ENCODE measurements at regions of chr10 and their contacts with region 1.

Region 1: GRCh38 chr10:99845837-99846382 is 63.5 kb downstream of the ABCC2 start:
- DNase-seq: peak; percentile 79
- ATAC-seq: peak; percentile 95 to 98

Region 2: GRCh38 chr10:98748298-98748697 is 1097.6 kb before region 1 on chr10:
- intact Hi-C with region 1: no loop called
- DNase-seq: no peak
- ATAC-seq: no peak

Region 3: DNA sequence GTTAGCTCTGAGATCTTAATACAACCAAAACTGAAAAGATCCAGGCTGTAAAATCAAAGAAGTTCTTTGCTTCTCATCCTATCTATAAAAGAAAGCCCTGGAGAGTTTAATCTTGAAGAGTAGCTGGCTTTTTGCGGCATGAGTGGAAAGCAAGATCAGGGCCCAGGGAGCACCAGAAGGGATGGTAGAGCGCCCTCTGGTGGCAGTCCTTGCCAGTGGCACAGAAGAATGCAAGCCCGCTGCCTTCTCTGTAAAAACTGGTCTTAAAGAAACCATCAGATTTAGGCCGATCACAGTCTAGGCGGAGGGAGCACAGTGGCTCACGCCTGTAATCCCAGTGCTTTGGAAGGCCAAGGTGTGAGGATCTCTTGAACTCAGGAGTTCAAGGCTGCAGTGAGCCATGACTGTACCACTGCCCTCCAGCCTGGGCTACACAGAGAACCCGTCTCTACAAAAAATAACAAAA is 200.1 kb after region 1 on chr10:
- intact Hi-C with region 1: loop called (anchors 2 to 5 kb)
- DNase-seq: peak; percentile 91
- ATAC-seq: peak; percentile 77 to 89

Measured in left cardiac atrium (tissue), 4 donors.